ENCODE measurements at regions of chr3 and their contacts with region 1.

Region 1: GRCh38 chr3:49120438-49121131 is at the start of gene USP19:
- DNase-seq: peak; percentile 98
- total RNA-seq, gene USP19: 58.5 TPM

Region 2: DNA sequence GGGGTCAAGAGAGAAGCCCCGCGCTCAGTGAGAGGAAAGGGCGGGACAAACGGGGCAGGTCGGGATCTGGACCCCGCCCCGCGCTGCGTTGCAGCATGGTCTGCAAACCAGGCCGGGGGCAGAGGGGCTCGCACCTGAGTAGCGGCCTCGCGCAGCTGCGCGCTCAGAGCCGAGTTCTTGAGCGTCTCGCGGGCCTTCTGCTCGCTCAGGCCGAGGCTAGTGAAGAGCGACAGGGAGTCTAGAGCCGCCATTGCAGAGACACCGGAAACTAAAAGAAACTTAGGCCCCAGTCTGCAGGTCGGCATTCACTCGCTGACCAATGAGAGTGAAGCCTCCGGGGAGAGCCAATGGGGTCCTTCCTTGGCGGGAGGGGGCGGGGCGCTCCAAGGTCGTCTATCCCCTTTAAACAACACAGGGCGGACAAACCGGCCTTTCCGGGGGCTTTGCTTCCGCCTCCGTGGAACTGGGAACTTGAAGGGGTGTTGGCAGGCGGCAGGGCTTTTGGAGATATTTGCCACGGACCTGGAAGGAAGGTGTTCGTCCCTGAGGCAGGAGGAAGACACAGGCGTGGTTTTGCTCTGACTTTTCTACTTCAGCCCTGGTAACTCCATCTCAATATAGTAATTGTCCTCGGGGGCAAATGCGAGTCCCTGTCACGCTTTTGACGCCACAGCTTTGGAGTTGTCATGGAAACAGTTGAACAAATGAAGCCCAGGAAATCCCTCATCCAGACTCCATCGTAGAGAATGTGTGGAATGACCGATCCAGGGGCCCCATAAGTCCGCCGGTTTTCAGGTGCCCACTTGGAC is 15.9 kb before region 1 on chr3 and contains the start of gene QARS1:
- intact Hi-C with region 1: loop called (anchors 2 kb)
- DNase-seq: peak; percentile 96
- total RNA-seq, gene QARS1: 149 TPM

Region 3: DNA sequence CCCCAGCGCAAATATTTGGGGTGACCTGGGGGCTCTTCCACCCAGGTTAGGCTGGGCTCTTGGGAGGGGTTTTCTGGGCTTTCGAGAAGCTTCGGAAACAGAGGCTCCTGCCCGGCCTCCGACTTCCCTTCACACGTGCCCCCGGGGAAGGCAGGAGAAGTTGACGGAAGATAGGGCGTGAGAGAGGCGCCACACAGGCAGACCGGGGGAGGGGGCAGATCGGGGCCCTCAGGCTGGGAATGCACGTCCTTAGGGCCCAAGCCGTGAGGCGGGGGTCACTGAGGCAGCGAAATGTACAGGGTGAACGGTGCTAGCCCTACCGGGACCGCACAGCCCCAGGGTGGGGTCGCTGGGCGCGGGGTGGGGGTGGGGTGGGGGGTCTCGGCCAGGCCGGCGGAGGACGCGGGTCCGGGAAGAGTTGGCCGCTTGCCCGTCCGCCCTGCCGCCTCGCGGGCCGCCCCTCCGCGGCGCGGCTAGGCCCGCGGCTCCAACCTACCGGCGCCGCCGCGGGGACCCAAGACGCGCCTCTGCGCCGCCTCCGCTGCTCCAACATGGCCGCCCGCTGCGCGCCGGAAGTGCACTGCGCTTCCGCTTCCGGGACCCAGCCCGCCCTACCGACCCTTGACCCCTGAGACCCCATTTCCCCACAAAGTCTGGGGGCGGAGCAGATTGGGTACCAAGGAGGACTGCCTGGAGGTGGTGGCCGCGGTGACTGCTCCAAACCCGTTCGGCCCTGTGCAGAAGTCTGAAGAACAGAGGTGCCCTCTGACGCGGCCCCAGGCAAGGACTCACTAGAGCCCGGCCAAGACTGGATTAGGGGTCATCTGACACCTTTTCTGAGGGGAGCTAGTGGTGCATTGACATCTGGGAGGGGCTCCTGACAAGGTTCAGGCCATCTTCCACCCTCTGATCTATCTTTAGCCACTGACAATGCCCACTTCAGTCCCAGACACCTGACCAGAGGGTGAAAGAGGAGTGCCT is 45.5 kb after region 1 on chr3 and contains the start of gene CCDC71:
- intact Hi-C with region 1: loop called (anchors 2 kb)
- DNase-seq: peak; percentile 88
- total RNA-seq, gene CCDC71: 11.4 TPM

Measured in cardiac septum (tissue), 1 donor.